ENCODE measurements at regions of chr9 and their contacts with region 1.

Region 1: DNA sequence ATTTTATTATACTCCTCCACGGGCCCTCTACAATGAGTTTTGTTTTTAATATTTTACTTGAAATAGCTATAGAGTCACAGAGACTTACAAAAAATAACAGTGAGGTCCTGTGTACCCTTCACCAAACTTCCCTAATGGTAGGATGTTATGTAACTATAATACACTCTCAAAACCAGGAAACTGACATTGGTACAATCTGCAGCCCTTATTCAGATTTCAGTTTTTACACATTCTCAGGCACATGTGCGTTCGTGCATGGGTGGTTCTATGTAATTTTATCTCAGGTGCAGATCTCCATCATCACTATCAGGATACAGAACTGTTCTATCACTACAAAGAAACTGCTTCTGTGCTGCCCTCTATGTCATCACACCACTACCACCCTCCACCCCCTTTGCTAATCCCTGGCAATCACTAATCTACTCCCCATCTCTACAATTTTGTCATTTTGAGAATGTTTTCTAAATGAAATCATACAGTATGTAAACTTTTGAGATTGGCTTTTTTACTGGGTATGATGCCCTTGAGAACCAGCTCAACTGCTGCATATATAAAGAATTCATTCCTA is 16.4 kb downstream of the RAB14 start:
- DNase-seq: peak; percentile 41
- H3K4me3 ChIP-seq: no peak overlapping the region
- H3K27ac ChIP-seq: peak overlapping the region; percentile 38
- H3K4me1 ChIP-seq: peaks cover 50% of the 10 kb centered on the region
- CTCF ChIP-seq: no peak; the same call in 1 of the 2 replicates

Region 2: DNA sequence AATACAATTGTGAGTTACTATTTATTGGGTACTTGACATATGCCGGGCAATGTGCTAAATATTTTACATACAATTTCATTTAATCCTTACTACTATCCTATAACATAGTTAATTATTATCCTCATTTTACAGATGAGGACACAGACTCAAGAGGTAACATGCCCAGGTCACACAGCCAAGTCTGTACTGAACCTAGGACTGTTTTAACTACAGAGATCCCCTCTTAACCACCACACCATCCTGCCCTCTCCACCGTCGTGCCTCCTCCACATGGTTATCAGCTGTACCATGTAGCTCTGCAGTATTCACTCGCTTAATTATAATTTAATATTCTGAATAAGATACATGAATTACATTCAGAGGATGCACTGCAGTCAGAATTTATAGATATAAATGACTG is 11.1 kb after region 1 on chr9:
- CTCF ChIA-PET with region 1: interaction called, 3 read pairs
- POLR2A ChIA-PET with region 1: interaction called, 16 read pairs
- intact Hi-C with region 1: loop called (anchors 2 kb)
- DNase-seq: no peak
- H3K4me3 ChIP-seq: no peak overlapping the region
- H3K27ac ChIP-seq: no peak overlapping the region
- H3K4me1 ChIP-seq: peaks cover 81% of the 10 kb centered on the region
- CTCF ChIP-seq: no peak

Region 3: GRCh38 chr9:121201738-121202533 is 16.7 kb after region 1 on chr9 and contains the start of gene RAB14:
- CTCF ChIA-PET with region 1: interaction called, 3 read pairs
- POLR2A ChIA-PET with region 1: interaction called, 16 read pairs
- intact Hi-C with region 1: loop called (anchors 2 kb)
- DNase-seq: peak; percentile 99
- H3K4me3 ChIP-seq: peak within 1 kb of the TSS; percentile 99
- H3K27ac ChIP-seq: peak within 1 kb of the TSS; percentile 81
- H3K4me1 ChIP-seq: peaks cover 58% of the 10 kb centered on the region
- CTCF ChIP-seq: peak; percentile 83
- total RNA-seq, gene RAB14: 8.1 and 8.6 TPM in 2 replicates

Region 4: DNA sequence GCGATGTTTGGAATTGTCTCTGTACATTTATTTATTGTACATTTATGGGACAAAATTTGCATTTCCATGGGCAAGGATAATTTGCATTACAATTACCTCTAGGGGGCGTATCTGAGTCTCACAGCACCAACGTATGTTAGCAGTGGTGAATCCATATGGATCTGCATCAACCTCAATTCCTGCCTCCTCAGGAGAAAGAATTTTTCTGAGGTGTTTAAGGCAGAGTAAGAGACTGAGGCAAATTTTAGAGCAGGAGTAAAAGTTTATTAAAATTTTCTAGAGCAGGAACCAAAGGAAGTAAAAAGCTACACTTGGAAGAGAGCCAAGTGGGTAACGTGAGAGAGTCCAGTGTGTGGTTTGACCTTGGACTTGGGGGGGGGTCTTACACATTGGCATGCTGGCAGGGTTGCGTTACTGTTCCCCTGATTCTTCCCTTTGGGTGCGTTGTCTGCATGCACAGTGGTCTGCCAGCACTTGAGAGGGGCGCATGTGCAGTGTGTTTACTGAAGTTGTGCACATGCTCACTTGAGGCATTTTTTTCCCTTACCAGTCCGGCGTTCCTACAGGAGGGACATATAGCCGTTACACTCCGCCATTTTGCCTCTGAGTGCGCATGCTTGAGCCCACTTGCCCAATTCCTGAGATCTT is 37.4 kb after region 1 on chr9:
- CTCF ChIA-PET with region 1: no interaction called
- POLR2A ChIA-PET with region 1: no interaction called
- intact Hi-C with region 1: no loop called
- DNase-seq: peak; percentile 37
- H3K4me3 ChIP-seq: no peak overlapping the region
- H3K27ac ChIP-seq: no peak overlapping the region
- H3K4me1 ChIP-seq: peaks cover 3% of the 10 kb centered on the region
- CTCF ChIP-seq: peak; percentile 84

Region 5: GRCh38 chr9:121289026-121289771 is 103.9 kb after region 1 on chr9:
- CTCF ChIA-PET with region 1: no interaction called
- POLR2A ChIA-PET with region 1: no interaction called
- intact Hi-C with region 1: no loop called
- DNase-seq: no peak
- H3K4me3 ChIP-seq: no peak overlapping the region
- H3K27ac ChIP-seq: no peak overlapping the region
- H3K4me1 ChIP-seq: no peaks in the 10 kb centered on the region
- CTCF ChIP-seq: no peak

Measured in OCI-LY7 (cell line).